Mammary epithelial cell (primary cell): ENCODE measurements at regions of chr18 and their contacts with region 1.

Region 1: DNA sequence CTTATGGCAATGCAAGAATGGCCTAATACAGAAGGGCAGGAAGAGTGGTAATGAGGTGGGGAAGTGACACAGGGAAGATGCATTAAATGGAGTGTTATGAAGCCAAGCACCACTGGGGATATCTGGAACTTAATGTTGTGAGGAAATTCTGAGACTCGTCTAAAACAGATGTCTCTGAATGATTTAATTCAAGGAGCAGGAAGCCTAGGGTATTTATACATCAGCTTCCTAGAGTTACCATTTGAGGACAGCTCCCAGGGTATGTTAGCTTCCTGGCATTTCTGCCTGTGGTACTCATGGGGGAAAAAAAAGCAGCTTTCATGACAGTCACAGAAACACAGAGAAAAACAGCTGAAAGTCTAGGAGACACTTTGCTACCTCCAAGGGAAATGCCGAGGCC is 989.5 kb downstream of the CBLN2 start:
- DNase-seq: no peak
- H3K4me3 ChIP-seq: no peak overlapping the region
- H3K27ac ChIP-seq: no peak overlapping the region
- H3K4me1 ChIP-seq: no peaks in the 10 kb centered on the region
- H3K27me3 ChIP-seq: no peaks in the 10 kb centered on the region
- CTCF ChIP-seq: no peak

Region 2: DNA sequence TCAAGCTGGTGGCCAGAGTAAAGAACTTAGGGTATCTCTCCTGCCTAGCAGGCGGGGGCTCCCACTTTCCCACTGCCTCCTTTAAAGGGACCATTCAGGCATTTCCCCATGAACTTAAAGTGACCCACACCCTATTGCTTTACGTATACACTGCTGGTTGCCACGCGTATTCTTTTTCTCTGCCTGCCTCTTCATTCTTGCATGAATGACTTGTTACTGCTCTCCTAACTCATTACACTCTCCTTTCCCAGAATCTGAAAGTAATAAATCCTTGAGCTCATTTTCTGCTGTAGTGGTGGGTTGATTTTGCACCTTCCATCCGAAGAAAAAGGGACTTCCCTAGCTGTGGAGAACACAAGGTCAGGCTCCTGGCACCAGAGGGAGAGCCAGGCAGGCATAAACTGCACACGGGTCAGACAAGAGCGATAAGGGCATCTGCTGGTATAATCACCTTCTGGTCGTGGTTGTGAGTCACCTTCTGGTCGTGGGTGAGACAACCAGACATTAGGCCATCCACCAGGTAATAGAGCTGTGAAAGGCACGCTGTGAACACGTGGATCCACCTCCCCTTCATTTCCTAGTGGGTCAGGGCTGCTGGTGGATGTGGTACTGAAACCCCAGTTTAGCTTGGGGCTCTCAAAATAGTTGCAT is 315.6 kb before region 1 on chr18:
- CTCF ChIA-PET with region 1: no interaction called
- dilution Hi-C with region 1: no loop called
- in situ Hi-C with region 1: no loop called
- intact Hi-C with region 1: no loop called
- DNase-seq: no peak
- H3K4me3 ChIP-seq: no peak overlapping the region
- H3K27ac ChIP-seq: no peak overlapping the region
- H3K4me1 ChIP-seq: no peaks in the 10 kb centered on the region
- H3K27me3 ChIP-seq: no peaks in the 10 kb centered on the region
- CTCF ChIP-seq: no peak

Region 3: DNA sequence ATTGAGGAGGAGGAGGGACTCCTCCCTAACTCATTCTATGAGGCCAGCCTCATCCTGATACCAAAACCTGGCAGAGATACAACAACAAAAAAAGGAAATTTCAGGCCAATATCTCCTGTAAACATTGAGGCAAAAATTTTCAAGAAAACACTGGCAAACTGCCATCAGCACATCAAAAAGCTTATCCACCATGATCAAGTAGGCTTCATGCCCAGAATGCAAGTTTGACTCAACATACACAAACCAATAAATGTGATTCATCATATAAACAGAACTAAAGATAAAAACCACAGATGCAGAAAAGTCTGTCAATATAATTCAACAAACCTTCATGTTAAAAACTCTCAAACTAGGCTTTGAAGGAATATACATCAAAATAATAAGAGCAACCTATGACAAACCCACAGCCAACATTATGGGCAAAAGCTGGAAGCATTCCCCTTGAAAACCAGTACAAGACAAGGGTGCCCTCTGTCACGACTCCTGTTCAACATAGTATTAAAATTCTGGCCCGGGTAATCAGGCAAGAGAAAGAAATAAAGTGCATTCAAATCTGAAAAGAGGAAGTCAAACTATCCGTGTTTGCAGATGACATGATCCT is 24.9 kb before region 1 on chr18:
- CTCF ChIA-PET with region 1: no interaction called
- dilution Hi-C with region 1: no loop called
- in situ Hi-C with region 1: no loop called
- intact Hi-C with region 1: loop called (anchors 1 kb)
- DNase-seq: no peak
- H3K4me3 ChIP-seq: no peak overlapping the region
- H3K27ac ChIP-seq: no peak overlapping the region
- H3K4me1 ChIP-seq: no peaks in the 10 kb centered on the region
- H3K27me3 ChIP-seq: no peaks in the 10 kb centered on the region
- CTCF ChIP-seq: no peak